ENCODE measurements at regions of chr2 and their contacts with region 1.

Region 1: DNA sequence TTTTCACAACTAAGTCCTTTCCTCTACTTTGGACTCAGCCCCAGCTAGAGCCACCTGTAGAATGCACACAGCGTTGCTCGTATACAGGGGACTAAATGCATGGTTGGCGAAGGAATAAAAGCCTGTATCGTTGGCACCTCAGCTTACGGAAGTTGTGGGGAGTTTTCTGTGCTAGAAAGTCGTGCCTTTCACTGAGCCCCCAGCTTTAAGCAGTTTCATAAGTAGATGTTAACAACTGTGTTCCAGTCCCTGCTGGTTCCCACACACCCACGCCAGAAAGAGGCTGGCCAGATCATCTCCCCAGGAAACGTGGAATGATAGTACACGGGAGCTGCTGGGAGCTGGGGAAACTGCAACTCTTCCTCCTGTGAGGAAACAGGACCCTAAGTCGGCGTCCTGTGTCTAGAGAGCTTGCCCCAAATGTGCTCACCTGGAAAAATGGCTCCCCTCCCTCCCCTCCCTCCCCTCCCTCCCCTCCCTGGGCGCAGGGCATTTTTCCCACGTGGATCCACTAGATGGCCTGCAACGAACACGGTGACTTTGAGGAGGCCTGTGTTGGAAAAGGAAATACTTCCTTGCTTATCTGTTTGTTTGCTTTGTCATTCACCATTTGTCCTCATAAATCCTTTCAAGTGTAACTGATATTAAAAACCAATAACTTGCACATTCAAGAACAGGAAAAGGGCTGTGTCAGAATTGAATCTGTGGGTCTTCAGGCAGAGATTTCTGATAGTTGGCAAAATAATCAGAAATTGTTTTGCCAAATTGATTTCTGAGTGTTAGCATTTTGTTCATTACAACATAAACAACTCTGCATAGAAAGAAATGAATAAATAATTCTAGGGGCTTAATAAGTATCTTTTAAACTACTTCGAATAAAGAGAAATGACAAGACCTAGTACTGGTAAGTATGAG is 43.9 kb upstream of the RFX8 start:
- DNase-seq: peak; percentile 50
- ATAC-seq: peak; percentile 54
- H3K4me3 ChIP-seq: no peak overlapping the region
- H3K27ac ChIP-seq: no peak overlapping the region; the same call in 1 of the 2 replicates
- H3K4me1 ChIP-seq: peaks cover 24% of the 10 kb centered on the region
- H3K27me3 ChIP-seq: no peaks in the 10 kb centered on the region
- CTCF ChIP-seq: peak; percentile 56
- POLR2A ChIP-seq: no peak
- RAD21 ChIP-seq: peak; percentile 59

Region 2: DNA sequence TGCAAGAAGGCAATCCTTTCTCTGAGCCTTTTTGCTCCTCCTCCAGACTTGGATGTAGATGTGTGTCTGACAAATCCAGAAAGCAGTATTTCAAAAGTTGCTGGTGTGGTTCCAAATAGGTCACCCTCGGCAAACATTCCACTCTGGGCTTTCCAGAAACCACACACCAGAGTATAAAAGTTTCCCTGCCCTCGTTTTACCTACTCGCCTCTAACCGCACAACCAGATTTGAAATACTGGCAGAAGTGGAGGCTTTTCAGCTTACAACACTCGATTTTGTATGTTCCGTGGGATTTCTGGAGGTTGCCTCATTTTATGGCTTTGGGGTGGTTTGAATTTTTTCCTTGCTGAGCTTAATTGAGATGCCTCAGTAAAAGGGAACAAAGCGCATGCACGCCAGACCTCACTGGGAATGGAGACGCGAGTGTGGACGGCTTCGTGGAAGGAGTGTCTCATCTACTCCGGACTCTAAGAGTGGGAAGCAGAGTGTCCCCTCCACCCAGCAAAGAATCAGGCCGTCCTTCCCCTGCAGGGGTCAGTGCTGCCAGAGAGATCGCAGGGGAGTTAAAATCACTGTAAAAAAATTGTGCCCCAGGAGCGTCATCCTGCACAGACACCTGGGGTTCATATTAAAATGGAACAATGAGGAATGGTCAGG is 560.7 kb before region 1 on chr2:
- CTCF ChIA-PET with region 1: no interaction called
- POLR2A ChIA-PET with region 1: no interaction called
- dilution Hi-C with region 1: no loop called
- in situ Hi-C with region 1: no loop called
- intact Hi-C with region 1: no loop called
- DNase-seq: peak; percentile 84
- ATAC-seq: peak; percentile 65
- H3K4me3 ChIP-seq: no peak overlapping the region
- H3K27ac ChIP-seq: no peak overlapping the region
- H3K4me1 ChIP-seq: peaks cover 11% of the 10 kb centered on the region
- H3K27me3 ChIP-seq: no peaks in the 10 kb centered on the region
- CTCF ChIP-seq: no peak
- POLR2A ChIP-seq: no peak
- RAD21 ChIP-seq: no peak

Region 3: DNA sequence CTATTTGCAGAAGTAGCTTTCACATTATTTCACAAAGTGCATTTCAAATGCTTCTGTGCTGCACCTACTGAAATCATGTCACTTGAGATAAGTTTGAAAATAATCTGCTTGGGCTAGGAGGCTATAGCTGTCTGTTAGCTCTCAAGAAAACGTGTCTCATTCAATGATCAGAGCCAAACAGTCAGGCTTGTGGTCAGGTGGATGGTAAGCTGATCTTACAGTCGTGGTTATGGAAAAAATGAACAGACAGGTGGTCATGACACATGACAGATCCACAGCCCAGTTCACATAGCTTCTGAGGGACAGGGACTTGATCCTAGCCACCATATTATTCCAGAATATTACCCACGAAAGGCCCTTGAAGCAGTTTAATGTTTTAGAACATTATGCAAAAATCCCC is 17.4 kb before region 1 on chr2:
- CTCF ChIA-PET with region 1: no interaction called
- POLR2A ChIA-PET with region 1: no interaction called
- dilution Hi-C with region 1: no loop called
- in situ Hi-C with region 1: no loop called
- intact Hi-C with region 1: loop called (anchors 2 kb)
- DNase-seq: peak; percentile 60
- ATAC-seq: no peak
- H3K4me3 ChIP-seq: no peak overlapping the region
- H3K27ac ChIP-seq: no peak overlapping the region
- H3K4me1 ChIP-seq: peaks cover 4% of the 10 kb centered on the region
- H3K27me3 ChIP-seq: no peaks in the 10 kb centered on the region
- CTCF ChIP-seq: no peak
- POLR2A ChIP-seq: no peak
- RAD21 ChIP-seq: no peak

Region 4: DNA sequence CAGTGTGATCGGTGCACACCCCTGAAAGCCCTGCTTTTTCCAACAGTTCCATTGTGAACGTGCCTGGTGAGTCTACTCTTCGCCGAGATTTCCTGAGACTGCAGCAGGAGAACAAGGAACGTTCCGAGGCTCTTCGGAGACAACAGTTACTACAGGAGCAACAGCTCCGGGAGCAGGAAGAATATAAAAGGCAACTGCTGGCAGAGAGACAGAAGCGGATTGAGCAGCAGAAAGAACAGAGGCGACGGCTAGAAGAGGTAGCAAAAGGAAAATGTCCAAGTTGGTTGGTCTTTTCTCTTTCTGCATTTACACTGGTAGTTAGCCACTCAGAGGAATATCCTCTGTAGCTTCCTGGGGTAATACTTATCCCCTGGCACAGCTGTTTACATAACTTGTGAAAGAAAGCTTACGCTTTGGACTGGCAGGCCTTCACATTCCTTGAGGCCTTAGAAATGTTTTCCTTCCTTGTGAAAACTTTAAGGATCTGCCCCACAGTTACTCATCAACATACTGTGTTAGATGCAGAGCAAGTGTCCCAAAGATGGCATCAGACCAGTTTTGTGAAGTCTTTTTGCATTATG is 325.3 kb after region 1 on chr2:
- CTCF ChIA-PET with region 1: no interaction called
- POLR2A ChIA-PET with region 1: no interaction called
- dilution Hi-C with region 1: no loop called
- in situ Hi-C with region 1: loop called (anchors 10 kb)
- intact Hi-C with region 1: no loop called
- DNase-seq: peak; percentile 75
- ATAC-seq: peak; percentile 76
- H3K4me3 ChIP-seq: no peak overlapping the region
- H3K27ac ChIP-seq: no peak overlapping the region
- H3K4me1 ChIP-seq: peaks cover 18% of the 10 kb centered on the region
- H3K27me3 ChIP-seq: no peaks in the 10 kb centered on the region
- CTCF ChIP-seq: no peak
- POLR2A ChIP-seq: no peak
- RAD21 ChIP-seq: no peak